Calu3 (cell line): ENCODE measurements at regions of chr17 and their contacts with region 1.

Region 1: GRCh38 chr17:31842183-31843069 is 16.6 kb downstream of the COPRS start:
- DNase-seq: peak; percentile 72
- H3K4me3 Mint-ChIP-seq: no peak overlapping the region
- H3K27ac Mint-ChIP-seq: no peak overlapping the region
- H3K4me1 Mint-ChIP-seq: no peaks in the 10 kb centered on the region
- H3K27me3 Mint-ChIP-seq: no peaks in the 10 kb centered on the region
- CTCF ChIP-seq: peak; percentile 93

Region 2: GRCh38 chr17:31558748-31559644 is 283.4 kb before region 1 on chr17:
- CTCF ChIA-PET with region 1: interaction called, 16 read pairs
- intact Hi-C with region 1: loop called (anchors 2 kb)
- DNase-seq: peak; percentile 78
- H3K4me3 Mint-ChIP-seq: peak overlapping the region; percentile 76
- H3K27ac Mint-ChIP-seq: peak overlapping the region; percentile 64
- H3K4me1 Mint-ChIP-seq: peaks cover 22% of the 10 kb centered on the region
- H3K27me3 Mint-ChIP-seq: no peaks in the 10 kb centered on the region
- CTCF ChIP-seq: peak; percentile 93

Region 3: GRCh38 chr17:31859474-31860008 is 17.1 kb after region 1 on chr17:
- CTCF ChIA-PET with region 1: no interaction called
- intact Hi-C with region 1: no loop called
- DNase-seq: no peak
- H3K4me3 Mint-ChIP-seq: peak overlapping the region; percentile 54
- H3K27ac Mint-ChIP-seq: peak overlapping the region; percentile 73
- H3K4me1 Mint-ChIP-seq: peaks cover 27% of the 10 kb centered on the region
- H3K27me3 Mint-ChIP-seq: no peaks in the 10 kb centered on the region
- CTCF ChIP-seq: no peak